Activated CD4-positive, alpha-beta T cell treated with anti-CD3 and anti-CD28 coated beads for 36 hours (primary cell): ENCODE measurements at regions of chr5 and their contacts with region 1.

Region 1: GRCh38 chr5:67724412-67725135 is 491.0 kb upstream of the PIK3R1 start:
- DNase-seq: no peak
- ATAC-seq: no peak
- H3K4me3 Mint-ChIP-seq: no peak overlapping the region
- H3K27ac Mint-ChIP-seq: no peak overlapping the region
- H3K4me1 Mint-ChIP-seq: no peaks in the 10 kb centered on the region
- H3K27me3 Mint-ChIP-seq: peaks cover 2% of the 10 kb centered on the region

Region 2: GRCh38 chr5:67679184-67679841 is 45.3 kb before region 1 on chr5:
- CTCF ChIA-PET with region 1: no interaction called
- POLR2A ChIA-PET with region 1: interaction called, 11 read pairs
- intact Hi-C with region 1: no loop called
- DNase-seq: no peak
- ATAC-seq: no peak
- H3K4me3 Mint-ChIP-seq: no peak overlapping the region
- H3K27ac Mint-ChIP-seq: no peak overlapping the region
- H3K4me1 Mint-ChIP-seq: no peaks in the 10 kb centered on the region
- H3K27me3 Mint-ChIP-seq: peaks cover 4% of the 10 kb centered on the region